HEK293 (cell line): ENCODE measurements at regions of chr11 and their contacts with region 1.

Region 1: DNA sequence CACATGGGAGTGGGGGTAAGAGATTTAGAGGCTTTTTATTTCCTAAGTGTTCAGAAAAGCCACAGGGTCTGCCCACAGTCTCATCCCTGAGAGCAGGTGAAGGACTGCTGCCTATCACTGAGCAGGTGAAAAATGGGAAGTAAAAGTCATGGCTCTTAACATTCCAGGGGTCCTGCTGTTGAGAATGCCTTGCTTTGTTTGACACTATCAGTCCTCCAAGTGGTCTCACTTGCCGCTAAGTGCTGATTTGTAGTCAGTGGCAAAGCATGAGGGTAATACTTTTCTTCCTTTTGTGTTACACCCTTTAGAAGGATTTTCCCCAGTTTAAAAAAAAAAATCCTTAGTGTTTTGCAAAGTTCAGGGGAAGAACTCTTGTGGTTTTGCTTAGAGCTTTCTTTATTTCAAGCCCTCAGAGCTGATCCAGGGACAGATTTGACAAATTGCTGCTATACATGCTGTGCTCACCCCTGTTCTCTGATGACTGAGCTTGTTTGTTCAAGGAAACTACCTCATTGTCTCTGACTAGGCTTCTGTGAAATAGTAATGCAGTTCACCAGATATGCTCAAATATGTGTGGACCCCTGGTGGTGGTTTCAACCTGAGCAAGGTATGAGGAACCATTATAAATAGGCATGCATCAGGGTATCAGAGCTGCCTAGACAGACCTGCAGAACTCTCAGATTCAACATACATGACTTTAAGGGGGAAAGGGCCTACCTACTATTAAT is 141.0 kb downstream of the ARHGAP42 start:
- H3K4me3 ChIP-seq: no peak overlapping the region
- H3K27ac ChIP-seq: no peak overlapping the region
- H3K4me1 ChIP-seq: peaks cover 8% of the 10 kb centered on the region
- CTCF ChIP-seq: peak; percentile 21; the same call in 1 of the 2 replicates

Region 2: DNA sequence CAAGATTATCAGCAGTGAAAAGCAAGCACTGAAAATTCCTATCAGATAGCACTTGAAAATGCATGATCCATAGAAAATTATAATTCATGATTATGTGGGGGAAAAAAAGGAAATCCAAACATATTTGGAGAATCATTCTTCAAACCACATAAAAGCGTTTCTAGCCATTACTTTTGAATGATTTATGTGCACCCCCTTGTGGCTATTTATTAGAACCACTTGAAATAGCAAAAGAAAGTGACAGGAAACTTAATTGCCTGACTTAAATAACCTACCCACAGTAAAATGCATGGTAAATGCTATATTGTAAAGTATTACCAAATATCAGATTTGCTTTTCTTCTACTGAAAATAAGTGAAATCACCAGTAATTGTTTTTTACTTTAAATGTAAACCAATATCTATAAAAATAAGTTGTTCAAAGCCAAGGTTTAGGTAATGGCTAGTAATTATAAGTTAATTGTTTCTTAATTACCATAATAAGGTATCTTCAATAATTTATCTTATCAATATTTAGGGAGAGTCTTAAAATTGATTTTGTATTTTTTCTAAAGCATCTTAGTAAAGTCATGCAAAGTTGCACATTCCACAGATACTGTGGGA is 27.5 kb after region 1 on chr11:
- CTCF ChIA-PET with region 1: interaction called, 10 read pairs
- POLR2A ChIA-PET with region 1: no interaction called
- H3K4me3 ChIP-seq: no peak overlapping the region
- H3K27ac ChIP-seq: no peak overlapping the region
- H3K4me1 ChIP-seq: no peaks in the 10 kb centered on the region
- CTCF ChIP-seq: peak; percentile 22; the same call in 1 of the 2 replicates

Region 3: GRCh38 chr11:100930185-100930778 is 102.2 kb after region 1 on chr11:
- CTCF ChIA-PET with region 1: interaction called, 10 read pairs
- POLR2A ChIA-PET with region 1: no interaction called
- H3K4me3 ChIP-seq: no peak overlapping the region
- H3K27ac ChIP-seq: no peak overlapping the region
- H3K4me1 ChIP-seq: no peaks in the 10 kb centered on the region; the same call in 1 of the 2 replicates
- CTCF ChIP-seq: 0 out of 2 replicates have a peak, but pooled peaks have one; percentile 16